ENCODE measurements at regions of chr5 and their contacts with region 1.

Region 1: DNA sequence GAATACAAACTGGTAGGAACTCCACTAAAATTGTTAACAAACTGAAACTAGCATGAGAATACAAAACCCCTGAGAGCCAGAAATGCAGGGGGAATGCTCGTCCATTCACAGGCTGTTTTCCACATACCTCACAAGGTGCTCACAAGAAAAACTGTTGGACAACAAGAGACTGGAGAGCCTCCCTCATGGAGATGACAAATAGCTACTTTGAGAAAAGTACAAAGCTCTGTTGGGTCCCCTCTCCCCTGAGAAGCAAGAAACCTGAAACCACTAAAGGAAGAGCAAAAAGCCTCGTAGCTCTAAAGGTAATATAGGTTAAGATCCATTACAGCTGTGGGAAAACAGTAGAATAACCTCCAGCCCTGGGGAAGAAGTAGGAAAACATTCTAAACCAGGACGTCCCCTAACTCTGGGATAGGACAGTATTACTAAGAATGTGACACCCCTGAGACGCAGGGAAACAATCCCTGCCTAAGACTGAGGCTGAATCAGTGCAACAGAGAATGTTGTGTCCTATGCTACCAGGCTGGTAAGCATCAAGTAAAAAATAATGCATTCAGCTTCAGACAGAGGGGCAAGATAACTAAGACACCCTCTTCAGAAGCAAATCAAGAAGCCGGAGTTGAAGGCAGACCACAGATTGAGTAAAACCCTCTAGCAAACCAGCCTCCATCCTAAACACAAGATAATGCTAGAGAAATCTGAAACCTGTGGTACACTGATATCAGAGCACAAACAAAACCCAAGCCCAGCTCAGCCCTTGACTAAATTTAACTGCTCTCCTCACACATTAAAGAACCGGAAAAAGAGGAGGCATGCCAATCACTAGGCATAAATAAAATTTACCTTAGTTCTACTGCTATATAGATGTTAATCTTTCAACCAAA is 160.2 kb downstream of the SSBP2 start:
- DNase-seq: no peak
- H3K4me3 ChIP-seq: no peak overlapping the region
- H3K27ac ChIP-seq: no peak overlapping the region
- H3K4me1 ChIP-seq: no peaks in the 10 kb centered on the region
- H3K27me3 ChIP-seq: no peaks in the 10 kb centered on the region
- CTCF ChIP-seq: no peak

Region 2: DNA sequence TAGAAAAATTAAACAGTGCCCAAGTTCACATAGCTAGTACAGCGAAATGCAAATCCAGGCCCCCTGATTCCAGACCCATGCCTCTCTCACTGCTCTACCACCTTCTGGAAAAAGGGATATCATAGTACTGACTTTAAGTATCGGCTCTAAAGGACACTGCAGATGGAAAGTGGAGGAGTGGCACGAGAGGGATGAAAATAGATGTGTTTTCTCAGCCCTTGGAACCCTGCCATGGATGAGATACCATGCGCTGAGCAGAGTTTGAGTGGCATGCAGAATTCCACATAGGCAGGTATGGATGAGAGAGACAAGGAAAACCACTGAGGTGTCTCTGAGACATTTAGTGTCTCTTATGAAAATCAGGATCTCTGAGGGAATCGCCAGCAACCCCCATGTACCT is 338.8 kb before region 1 on chr5:
- intact Hi-C with region 1: no loop called
- DNase-seq: no peak
- H3K4me3 ChIP-seq: no peak overlapping the region
- H3K27ac ChIP-seq: no peak overlapping the region
- H3K4me1 ChIP-seq: no peaks in the 10 kb centered on the region
- H3K27me3 ChIP-seq: no peaks in the 10 kb centered on the region
- CTCF ChIP-seq: no peak

Region 3: GRCh38 chr5:81301271-81302015 is 289.3 kb before region 1 on chr5 and contains the start of gene ZCCHC9:
- intact Hi-C with region 1: no loop called
- DNase-seq: peak; percentile 74 to 96
- H3K4me3 ChIP-seq: peak within 1 kb of the TSS; percentile 77 to 96
- H3K27ac ChIP-seq: peak within 1 kb of the TSS; percentile 88 to 93
- H3K4me1 ChIP-seq: peaks cover 5 to 16% of the 10 kb centered on the region in 2 donors
- H3K27me3 ChIP-seq: no peaks in the 10 kb centered on the region
- CTCF ChIP-seq: peak in 2 of 3 experiments; percentile 17 to 19
- total RNA-seq, gene ZCCHC9: 10.5 TPM

Region 4: GRCh38 chr5:81533629-81534405 is 56.9 kb before region 1 on chr5:
- intact Hi-C with region 1: loop called (anchors 10 kb)
- DNase-seq: no peak
- H3K4me3 ChIP-seq: no peak overlapping the region
- H3K27ac ChIP-seq: no peak overlapping the region
- H3K4me1 ChIP-seq: no peaks in the 10 kb centered on the region
- H3K27me3 ChIP-seq: no peaks in the 10 kb centered on the region
- CTCF ChIP-seq: no peak

Measured in ascending aorta (tissue), 2 donors.